Calu3 (cell line): ENCODE measurements at regions of chr1 and their contacts with region 1.

Region 1: DNA sequence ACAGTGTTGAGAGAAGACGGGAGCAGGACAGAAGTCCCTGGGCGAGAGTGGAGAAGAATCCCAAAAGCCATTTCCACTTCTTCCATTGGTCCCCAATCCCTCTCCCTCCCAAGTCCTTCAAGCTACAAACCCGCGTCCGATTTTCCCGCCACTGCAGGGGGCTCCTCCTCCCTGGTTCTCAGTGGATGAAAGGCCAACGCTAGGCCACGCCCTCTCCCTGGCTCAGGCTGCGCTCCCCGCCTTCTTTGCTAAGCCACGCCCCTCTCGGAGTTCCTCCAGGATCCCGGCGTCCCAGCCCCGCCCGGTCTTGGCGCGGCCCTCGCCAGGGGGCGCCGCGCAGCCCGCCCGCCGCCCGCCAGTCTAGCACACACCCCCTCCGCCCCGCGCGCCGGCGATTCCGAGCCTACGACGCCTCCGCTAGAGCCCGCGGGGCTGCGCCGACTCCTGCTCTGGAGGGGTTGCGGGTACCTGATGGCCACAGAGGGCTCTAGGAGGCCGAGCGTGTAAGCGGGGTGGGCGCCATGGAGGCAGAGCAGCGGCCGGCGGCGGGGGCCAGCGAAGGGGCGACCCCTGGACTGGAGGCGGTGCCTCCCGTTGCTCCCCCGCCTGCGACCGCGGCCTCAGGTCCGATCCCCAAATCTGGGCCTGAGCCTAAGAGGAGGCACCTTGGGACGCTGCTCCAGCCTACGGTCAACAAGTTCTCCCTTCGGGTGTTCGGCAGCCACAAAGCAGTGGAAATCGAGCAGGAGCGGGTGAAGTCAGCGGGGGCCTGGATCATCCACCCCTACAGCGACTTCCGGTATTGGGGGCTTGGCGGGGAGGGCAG is at the start of gene HCN3:
- DNase-seq: peak; percentile 99
- H3K4me3 Mint-ChIP-seq: peak within 1 kb of the TSS; percentile 75
- H3K27ac Mint-ChIP-seq: no peak within 1 kb of the TSS
- H3K4me1 Mint-ChIP-seq: peaks cover 31% of the 10 kb centered on the region
- H3K27me3 Mint-ChIP-seq: no peaks in the 10 kb centered on the region
- CTCF ChIP-seq: peak; percentile 82
- total RNA-seq, gene HCN3: 11.8 and 19.6 TPM in 2 replicates

Region 2: DNA sequence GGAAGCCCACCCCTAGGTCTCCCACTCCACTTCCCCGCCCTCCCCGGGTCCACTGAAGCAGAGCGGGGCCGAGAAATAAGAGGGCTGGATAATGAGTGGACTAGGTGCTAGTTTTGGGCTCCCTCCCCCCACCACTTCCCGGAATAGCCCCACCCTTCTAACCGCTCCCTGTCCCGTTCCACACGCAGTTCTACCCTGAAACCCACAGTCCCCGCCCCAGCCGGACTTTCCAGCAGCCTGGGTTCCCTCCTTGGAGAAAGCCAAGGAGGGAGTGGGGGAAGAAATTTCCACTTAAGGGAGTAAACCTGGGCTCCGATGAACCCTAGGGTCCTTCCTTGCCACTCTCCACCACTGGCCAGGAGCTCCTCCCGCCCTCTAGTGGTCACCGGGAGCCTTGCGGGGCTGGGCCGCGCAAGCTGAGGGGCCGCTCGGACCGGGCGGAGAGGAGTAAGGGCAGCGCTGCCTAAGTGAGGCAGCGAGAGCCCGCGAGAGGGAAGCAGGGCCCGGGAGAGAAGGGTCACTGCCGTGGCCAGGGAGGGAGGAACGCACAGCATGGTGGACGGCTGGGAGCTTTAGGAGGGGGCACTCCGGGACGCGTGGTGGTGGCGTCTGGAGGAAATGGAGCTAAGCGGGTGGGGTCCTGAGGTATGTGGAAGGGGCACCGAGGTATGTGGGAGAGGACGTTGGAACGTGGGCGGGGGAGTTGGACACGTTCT is 83.8 kb before region 1 on chr1:
- CTCF ChIA-PET with region 1: no interaction called
- intact Hi-C with region 1: no loop called
- DNase-seq: peak; percentile 95
- H3K4me3 Mint-ChIP-seq: peak overlapping the region; percentile 79
- H3K27ac Mint-ChIP-seq: peak overlapping the region; percentile 74
- H3K4me1 Mint-ChIP-seq: peaks cover 27% of the 10 kb centered on the region
- H3K27me3 Mint-ChIP-seq: peaks cover 49% of the 10 kb centered on the region
- CTCF ChIP-seq: peak; percentile 97

Region 3: DNA sequence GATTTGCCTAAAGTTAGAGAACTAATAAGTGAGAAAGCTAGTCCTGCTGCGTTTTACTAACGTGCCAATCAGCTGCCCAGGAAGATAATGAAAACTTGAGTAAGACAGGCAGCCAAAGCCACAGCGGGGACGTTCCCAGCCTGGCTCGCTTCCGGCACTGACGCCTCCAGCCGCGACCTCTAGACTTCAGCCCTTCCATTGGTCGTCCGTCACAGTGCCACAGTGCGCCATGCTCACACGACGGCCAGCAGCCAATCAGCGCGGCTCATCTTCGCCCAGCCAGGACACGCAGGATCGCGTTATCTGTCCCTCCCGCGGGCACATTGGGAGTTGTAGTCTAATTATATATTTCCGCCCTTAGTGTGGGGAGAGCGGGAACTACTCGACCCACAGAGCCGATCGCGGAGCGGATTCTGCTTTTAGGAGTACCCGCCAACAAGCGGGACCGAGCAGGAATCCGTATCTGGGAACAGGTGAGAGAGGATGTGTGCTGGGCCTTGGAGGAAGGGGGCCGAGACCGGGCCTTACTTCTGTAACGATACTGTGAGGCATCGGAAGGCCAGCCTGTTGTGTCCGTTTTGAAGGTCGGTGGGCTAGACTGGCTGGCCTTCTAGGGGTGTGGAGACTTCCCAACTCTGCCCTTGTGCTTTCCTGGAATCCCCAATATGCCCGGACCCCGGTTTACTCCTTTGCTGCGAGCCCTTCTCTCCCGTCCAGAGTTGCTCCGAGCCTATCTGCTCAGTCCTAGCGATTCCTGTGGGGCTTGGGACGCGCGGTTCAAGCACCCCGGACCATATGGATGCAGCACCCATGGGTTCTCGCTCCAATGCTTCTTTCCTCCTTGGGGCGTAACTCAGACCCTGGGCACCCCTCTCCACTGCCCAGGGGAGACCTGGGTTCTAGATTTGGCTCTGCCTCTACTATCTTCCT is 31.5 kb after region 1 on chr1 and contains the start of gene FDPS:
- CTCF ChIA-PET with region 1: interaction called, 10 read pairs
- intact Hi-C with region 1: no loop called
- DNase-seq: peak; percentile 98
- H3K4me3 Mint-ChIP-seq: peak within 1 kb of the TSS; percentile 90
- H3K27ac Mint-ChIP-seq: peak within 1 kb of the TSS; percentile 97
- H3K4me1 Mint-ChIP-seq: peaks cover 60% of the 10 kb centered on the region
- H3K27me3 Mint-ChIP-seq: no peaks in the 10 kb centered on the region
- CTCF ChIP-seq: no peak
- total RNA-seq, gene FDPS: 329 and 410 TPM in 2 replicates

Region 4: DNA sequence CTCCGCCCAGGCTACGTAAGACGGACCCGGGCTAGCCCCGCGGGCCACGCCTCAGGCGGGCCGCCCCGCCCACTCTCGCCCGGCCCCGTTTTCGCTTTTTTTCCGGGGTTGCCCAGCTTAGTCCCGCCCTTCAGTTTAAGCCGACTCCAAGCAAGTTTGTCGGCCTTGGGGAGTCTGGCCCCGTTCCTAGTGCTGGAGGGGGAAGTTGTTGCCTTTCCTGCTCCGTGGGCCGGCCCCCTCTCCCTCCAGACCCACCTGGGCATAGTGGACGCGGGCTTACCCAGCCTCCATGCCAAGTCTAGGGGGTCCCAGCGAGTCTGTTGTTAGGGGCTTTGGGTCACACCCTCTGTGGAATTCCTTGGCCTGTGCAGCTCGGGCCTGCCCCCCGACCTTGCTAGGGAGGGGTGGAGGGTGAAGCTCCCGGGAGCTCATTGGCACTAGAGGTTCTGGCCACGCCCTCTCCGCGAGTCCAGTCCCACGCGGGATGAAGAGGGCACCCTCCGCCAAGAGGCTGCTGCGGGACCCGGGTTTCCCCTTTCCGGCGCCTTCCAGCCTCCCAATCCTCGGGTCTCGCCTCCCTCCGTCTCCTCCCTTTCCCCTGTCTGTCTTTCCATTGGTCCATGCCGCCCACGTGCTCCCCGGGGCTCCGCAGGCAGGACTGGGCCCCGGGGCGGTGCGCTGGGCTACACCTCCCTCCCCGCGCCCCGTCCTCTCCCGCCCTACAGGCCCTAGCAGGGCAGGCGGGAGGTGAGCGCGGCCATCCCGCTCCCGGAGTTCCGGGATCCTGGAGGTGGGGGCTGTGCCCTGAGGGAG is 46.7 kb after region 1 on chr1:
- CTCF ChIA-PET with region 1: interaction called, 19 read pairs
- intact Hi-C with region 1: loop called (anchors 2 kb)
- DNase-seq: peak; percentile 98
- H3K4me3 Mint-ChIP-seq: peak overlapping the region; percentile 90
- H3K27ac Mint-ChIP-seq: peak overlapping the region; percentile 60
- H3K4me1 Mint-ChIP-seq: peaks cover 41% of the 10 kb centered on the region
- H3K27me3 Mint-ChIP-seq: no peaks in the 10 kb centered on the region
- CTCF ChIP-seq: no peak

Region 5: DNA sequence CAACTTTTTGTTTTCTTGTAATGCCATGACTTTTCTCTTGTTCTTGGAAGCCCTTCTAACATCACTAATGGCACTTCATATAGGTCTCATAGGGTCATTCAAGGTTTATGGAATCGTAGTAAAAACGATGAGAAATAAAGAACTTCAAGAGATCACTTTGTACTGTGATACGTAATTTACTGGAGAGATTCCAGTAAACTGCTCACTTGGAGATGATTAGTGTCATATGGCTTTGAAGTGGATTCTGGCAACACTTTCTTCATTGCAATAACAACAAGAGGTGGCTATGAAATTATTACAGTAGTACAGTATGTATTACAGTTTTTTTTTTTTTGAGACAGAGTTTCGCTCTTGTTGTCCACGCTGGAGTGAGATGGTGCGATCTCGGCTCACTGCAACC is 146.8 kb after region 1 on chr1:
- CTCF ChIA-PET with region 1: interaction called, 11 read pairs
- intact Hi-C with region 1: no loop called
- DNase-seq: no peak
- H3K4me3 Mint-ChIP-seq: no peak overlapping the region
- H3K27ac Mint-ChIP-seq: no peak overlapping the region
- H3K4me1 Mint-ChIP-seq: no peaks in the 10 kb centered on the region
- H3K27me3 Mint-ChIP-seq: no peaks in the 10 kb centered on the region
- CTCF ChIP-seq: no peak